ENCODE measurements at regions of chr6 and their contacts with region 1.

Region 1: DNA sequence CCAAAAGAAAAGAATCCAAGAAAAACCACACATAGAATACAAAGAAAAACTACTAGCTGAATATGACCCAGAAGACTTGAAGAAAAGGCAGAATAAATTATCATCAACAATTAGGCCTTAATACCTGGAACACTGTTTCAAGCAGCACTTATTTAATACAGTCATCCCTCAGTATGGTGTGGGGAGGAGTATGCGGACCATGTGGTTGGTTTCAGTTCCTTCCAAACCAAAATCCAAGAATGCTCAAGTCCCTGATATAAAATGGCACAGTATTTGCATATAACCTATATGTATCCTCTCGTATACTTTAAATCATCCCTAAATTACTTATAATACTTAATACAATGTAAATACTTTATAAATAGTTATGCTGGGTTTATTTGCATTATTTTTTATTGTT is 16.1 kb downstream of the CDK19 start:
- DNase-seq: no peak
- ATAC-seq: peak; percentile 70
- H3K4me3 Mint-ChIP-seq: peak overlapping the region; percentile 53
- H3K27ac Mint-ChIP-seq: peak overlapping the region; percentile 30
- H3K4me1 Mint-ChIP-seq: peaks cover 45% of the 10 kb centered on the region
- H3K27me3 Mint-ChIP-seq: no peaks in the 10 kb centered on the region
- CTCF ChIP-seq: no peak

Region 2: DNA sequence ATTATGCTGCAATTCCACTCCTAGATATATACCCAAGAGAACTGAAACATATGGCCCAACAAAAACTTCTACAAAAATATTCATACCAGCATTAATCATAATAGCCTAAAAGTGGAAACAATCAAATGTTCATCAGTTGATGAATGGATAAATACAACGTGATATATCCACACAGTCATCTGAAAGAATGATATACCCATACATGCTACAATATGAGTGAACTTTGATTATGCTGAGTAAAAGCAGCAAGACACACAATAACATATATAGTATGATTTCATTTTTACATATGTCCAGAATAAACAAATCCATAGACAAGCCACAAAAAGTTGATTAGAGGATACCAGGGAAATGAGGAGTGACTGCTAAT is 14.6 kb before region 1 on chr6:
- CTCF ChIA-PET with region 1: no interaction called
- POLR2A ChIA-PET with region 1: interaction called, 4 read pairs
- intact Hi-C with region 1: loop called (anchors 2 kb)
- DNase-seq: no peak
- ATAC-seq: no peak
- H3K4me3 Mint-ChIP-seq: no peak overlapping the region
- H3K27ac Mint-ChIP-seq: peak overlapping the region; percentile 61
- H3K4me1 Mint-ChIP-seq: peaks cover 38% of the 10 kb centered on the region
- H3K27me3 Mint-ChIP-seq: no peaks in the 10 kb centered on the region
- CTCF ChIP-seq: no peak

Measured in activated B cell treated with CpG ODN at 0.5 μM for 24 hours (primary cell).